Stomach (tissue), 19 donors: ENCODE measurements at regions of chr19 and their contacts with region 1.

Region 1: GRCh38 chr19:39110263-39110967 is 15.2 kb upstream of the PAK4 start:
- DNase-seq: peak; percentile 81 to 83
- H3K4me3 ChIP-seq: no peak overlapping the region
- H3K27ac ChIP-seq: no peak overlapping the region
- H3K4me1 ChIP-seq: no peaks in the 10 kb centered on the region
- H3K27me3 ChIP-seq: peaks cover 0 to 70% (median 5%) of the 10 kb centered on the region in 3 donors
- CTCF ChIP-seq: peak in 5 of 7 experiments; percentile 55 to 76 (median 62)
- EP300 ChIP-seq: no peak
- POLR2A ChIP-seq: no peak

Region 2: DNA sequence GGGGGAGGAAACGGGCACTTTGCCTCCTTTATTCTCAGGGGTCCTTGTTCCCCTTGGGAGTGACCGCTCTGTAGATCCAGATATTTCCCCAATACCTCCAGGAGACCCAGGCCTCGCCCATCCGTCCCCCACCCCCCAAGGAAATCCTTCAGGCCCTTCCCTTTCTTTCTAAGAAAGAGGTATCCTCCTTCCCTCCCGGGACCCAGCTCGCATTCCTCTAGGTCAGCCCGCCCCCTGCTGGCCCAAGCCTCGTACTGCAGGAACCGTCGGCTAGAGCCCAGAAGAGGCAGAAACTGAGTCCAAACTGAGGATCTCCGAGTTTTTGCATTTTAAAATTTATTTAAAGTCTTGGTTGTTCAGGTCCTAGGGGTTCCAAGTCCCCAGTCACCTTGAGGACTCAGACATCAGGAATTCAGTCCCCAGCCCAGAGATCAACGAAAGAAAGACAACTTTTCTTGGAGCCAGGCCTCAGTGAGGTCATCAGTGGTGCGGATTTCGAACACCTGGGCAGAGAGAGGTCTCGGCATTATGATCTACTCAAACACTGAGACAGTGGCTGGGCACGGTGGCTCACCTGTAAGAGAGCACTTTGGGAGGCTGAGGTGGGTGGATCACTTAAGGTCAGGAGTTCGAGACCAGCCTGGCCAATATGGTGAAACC is 217.8 kb after region 1 on chr19:
- intact Hi-C with region 1: loop called (anchors 5 kb)
- DNase-seq: peak; percentile 91 to 92
- H3K4me3 ChIP-seq: no peak overlapping the region
- H3K27ac ChIP-seq: no peak overlapping the region
- H3K4me1 ChIP-seq: peaks cover 0 to 9% (median 3%) of the 10 kb centered on the region in 4 donors
- H3K27me3 ChIP-seq: peaks cover 0 to 4% (median 0%) of the 10 kb centered on the region in 3 donors
- CTCF ChIP-seq: peak in 6 of 7 experiments; percentile 57 to 98 (median 96)
- EP300 ChIP-seq: no peak
- POLR2A ChIP-seq: no peak